Aorta (tissue), 5 donors: ENCODE measurements at regions of chr10 and their contacts with region 1.

Region 1: DNA sequence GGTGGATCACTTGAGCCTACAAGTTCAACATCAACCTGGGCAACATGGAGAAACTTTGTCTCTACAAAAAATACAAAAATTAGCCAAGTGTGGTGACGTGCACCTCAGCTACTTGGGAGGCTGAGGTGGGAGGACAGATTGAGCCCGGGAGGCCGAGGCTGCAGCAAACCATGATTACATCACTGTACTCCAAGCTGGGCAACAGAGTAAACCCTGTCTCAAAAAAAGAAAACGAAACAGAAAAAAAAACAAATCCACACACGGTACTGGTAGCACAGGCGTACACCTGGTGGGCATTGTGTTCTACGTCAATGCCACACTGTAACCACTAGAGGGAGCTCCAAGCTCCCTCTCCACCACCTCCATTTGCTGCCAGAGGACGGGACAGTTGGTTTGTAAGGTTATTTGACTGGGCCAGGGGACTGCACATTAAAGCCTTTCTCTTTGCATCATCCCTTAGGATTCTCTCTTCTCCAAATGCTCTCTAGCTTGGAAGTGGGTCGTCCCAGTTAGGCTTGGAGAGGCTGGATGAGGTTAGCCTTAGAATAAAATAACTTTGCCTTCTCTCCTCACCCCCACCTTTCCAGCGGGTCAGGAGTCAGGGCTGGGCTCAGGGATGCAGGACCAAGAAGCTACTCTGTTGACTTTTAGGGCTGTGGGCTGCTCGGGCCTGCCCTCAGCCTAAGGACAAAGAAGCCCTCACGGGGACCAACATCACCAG is 130.8 kb downstream of the SORBS1 start:
- DNase-seq: no peak
- ATAC-seq: peak; percentile 78
- H3K4me3 ChIP-seq: no peak overlapping the region
- H3K27ac ChIP-seq: peak overlapping the region in 1 of 2 donors; percentile 43
- H3K4me1 ChIP-seq: peaks cover 0 to 7% of the 10 kb centered on the region in 2 donors
- H3K27me3 ChIP-seq: no peaks in the 10 kb centered on the region

Region 2: DNA sequence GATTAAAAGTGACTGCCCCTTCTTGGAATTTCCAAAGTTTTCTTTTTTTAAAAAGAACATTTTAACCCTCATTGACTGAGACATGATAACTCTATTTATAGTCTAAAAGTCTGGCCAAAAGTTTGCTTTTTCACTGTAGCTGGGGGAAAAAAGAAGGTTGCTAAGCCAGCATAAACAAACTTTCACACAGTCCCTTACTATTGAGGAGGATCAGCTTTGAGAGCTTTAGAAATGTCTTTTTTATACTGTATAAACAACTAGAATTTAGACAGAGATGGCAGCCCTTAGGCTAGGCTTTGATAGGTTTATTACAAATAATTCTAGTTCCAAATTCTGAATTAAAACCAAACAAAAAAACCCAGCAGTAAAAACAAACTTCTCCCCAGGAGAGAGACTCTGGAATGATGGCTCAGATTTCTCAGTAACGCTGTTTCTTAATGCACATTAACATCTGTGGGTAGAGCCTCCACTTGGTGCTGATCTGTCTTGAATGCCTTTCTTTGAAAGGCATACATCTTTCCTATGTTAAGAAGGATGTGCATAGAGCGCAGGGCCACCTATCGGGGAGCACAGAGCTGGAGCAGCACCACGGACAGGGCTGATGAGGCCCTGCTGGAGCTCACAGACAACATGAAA is 38.7 kb before region 1 on chr10:
- intact Hi-C with region 1: no loop called
- DNase-seq: no peak
- ATAC-seq: peak; percentile 24
- H3K4me3 ChIP-seq: no peak overlapping the region
- H3K27ac ChIP-seq: peak overlapping the region; percentile 69 to 93
- H3K4me1 ChIP-seq: peaks cover 6 to 29% of the 10 kb centered on the region in 2 donors
- H3K27me3 ChIP-seq: no peaks in the 10 kb centered on the region

Region 3: GRCh38 chr10:95601116-95601719 is 170.8 kb after region 1 on chr10:
- intact Hi-C with region 1: loop called (anchors 1 to 2 kb)
- DNase-seq: peak; percentile 85 to 88
- ATAC-seq: peak; percentile 90
- H3K4me3 ChIP-seq: no peak overlapping the region
- H3K27ac ChIP-seq: no peak overlapping the region
- H3K4me1 ChIP-seq: peaks cover 0 to 10% of the 10 kb centered on the region in 2 donors
- H3K27me3 ChIP-seq: no peaks in the 10 kb centered on the region